T-cell (primary cell): ENCODE measurements at regions of chr14 and their contacts with region 1.

Region 1: DNA sequence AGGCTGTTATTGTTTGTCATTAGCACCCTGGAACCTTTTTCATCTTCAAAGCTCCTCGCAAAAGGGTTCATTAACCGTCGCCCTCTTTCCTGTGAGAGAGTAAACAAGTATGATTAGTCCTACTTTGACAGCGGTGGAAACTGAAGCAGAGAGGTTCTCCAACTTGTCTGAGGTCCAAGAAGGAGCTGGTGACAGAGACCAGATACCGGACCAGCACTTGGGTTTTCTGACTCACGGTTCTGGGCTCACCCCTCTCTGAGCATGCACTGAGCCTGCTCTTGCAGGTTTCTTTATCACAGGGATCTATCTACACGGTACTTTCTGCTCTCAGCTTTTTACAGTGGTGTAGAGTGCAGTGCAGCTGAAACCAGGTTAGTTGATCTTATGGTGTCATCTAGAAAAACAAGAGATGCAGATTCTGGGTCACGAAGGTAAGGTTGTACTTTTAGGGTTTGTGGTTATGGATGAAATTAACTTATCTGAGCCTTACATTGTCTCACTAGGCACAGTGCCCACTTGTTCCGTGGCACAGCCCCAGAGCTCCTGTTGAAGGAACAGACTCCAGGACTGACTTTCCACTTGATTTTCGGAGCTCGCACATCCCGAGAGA is 62.1 kb downstream of the PPP2R5C start:
- DNase-seq: peak in 34 of 35 experiments; percentile 28 to 86 (median 64)
- ATAC-seq: peak; percentile 66 to 68 (median 67)
- H3K4me3 ChIP-seq: peak overlapping the region; percentile 60 to 70
- H3K4me3 Mint-ChIP-seq: peak overlapping the region; percentile 81 to 91 (median 88)
- H3K27ac ChIP-seq: peak overlapping the region; percentile 99
- H3K27ac Mint-ChIP-seq: peak overlapping the region; percentile 97
- H3K4me1 ChIP-seq: peaks cover 62 to 67% of the 10 kb centered on the region in 2 experiments
- H3K4me1 Mint-ChIP-seq: peaks cover 68 to 88% (median 77%) of the 10 kb centered on the region in 3 donors
- H3K27me3 ChIP-seq: no peaks in the 10 kb centered on the region
- H3K27me3 Mint-ChIP-seq: no peaks in the 10 kb centered on the region

Region 2: GRCh38 chr14:101791919-101792572 is 31.6 kb before region 1 on chr14:
- CTCF ChIA-PET with region 1: interaction called, 4 read pairs
- POLR2A ChIA-PET with region 1: interaction called in 1 of 2 experiments, 44 read pairs
- DNase-seq: peak in 1 of 35 experiments; percentile 61
- ATAC-seq: peak; percentile 61 to 84 (median 73)
- H3K4me3 ChIP-seq: peak overlapping the region; percentile 5 to 41
- H3K4me3 Mint-ChIP-seq: peak overlapping the region; percentile 72 to 73 (median 72)
- H3K27ac ChIP-seq: peak overlapping the region; percentile 82
- H3K27ac Mint-ChIP-seq: peak overlapping the region; percentile 89 to 92
- H3K4me1 ChIP-seq: peaks cover 6 to 13% of the 10 kb centered on the region in 2 experiments
- H3K4me1 Mint-ChIP-seq: peaks cover 24 to 41% (median 25%) of the 10 kb centered on the region in 3 donors
- H3K27me3 ChIP-seq: no peaks in the 10 kb centered on the region
- H3K27me3 Mint-ChIP-seq: no peaks in the 10 kb centered on the region

Region 3: DNA sequence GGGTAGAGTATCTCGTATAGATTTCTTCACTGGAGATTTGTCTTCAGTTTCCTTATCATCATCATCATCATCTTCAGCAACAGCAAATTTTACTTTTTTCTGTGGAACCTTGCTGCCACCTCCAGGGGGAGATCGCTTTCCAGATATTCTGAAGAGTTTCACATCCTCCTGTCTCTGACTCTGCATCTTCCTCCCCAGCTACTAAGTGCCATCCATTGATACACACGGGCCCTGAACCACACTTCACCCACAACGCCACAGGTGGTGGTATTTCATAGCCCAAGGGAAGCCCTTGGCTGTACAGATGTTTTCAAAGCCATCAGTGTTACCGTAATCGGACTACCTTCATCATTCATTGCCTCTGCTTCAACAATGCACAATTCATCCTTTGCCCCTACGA is 20.0 kb after region 1 on chr14:
- CTCF ChIA-PET with region 1: interaction called in 1 of 2 experiments, 4 read pairs
- POLR2A ChIA-PET with region 1: interaction called, 6 to 10 read pairs
- DNase-seq: peak in 33 of 35 experiments; percentile 37 to 83 (median 55)
- ATAC-seq: peak; percentile 59 to 75 (median 70)
- H3K4me3 ChIP-seq: no peak overlapping the region
- H3K4me3 Mint-ChIP-seq: peak overlapping the region; percentile 3 to 29 (median 18)
- H3K27ac ChIP-seq: peak overlapping the region; percentile 55
- H3K27ac Mint-ChIP-seq: peak overlapping the region; percentile 77 to 88
- H3K4me1 ChIP-seq: peaks cover 23 to 79% of the 10 kb centered on the region in 2 experiments
- H3K4me1 Mint-ChIP-seq: peaks cover 93 to 97% (median 94%) of the 10 kb centered on the region in 3 donors
- H3K27me3 ChIP-seq: no peaks in the 10 kb centered on the region
- H3K27me3 Mint-ChIP-seq: no peaks in the 10 kb centered on the region

Region 4: DNA sequence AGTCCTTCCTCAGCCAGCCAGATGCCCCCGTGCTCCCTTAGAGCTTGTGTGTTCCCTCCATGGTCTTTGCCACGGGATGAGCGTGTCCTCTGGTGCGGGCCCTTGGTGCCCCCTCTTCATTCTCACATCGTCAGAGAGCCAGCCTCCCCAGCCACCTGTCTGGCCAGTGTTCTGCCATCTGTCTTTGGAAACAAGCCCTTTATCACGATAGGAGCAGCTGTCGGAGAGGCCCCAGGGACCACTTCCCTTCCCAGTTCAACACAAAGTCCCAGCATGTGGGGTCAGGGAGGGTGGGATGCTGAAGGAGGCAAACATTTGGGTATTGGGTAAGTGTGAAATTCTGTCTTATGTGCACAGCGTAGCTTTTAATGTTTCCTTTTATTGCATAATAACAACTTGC is 185.3 kb after region 1 on chr14:
- CTCF ChIA-PET with region 1: no interaction called
- POLR2A ChIA-PET with region 1: no interaction called
- DNase-seq: no peak
- ATAC-seq: no peak
- H3K4me3 ChIP-seq: no peak overlapping the region
- H3K4me3 Mint-ChIP-seq: no peak overlapping the region
- H3K27ac ChIP-seq: no peak overlapping the region
- H3K27ac Mint-ChIP-seq: no peak overlapping the region
- H3K4me1 ChIP-seq: no peaks in the 10 kb centered on the region
- H3K4me1 Mint-ChIP-seq: no peaks in the 10 kb centered on the region
- H3K27me3 ChIP-seq: no peaks in the 10 kb centered on the region
- H3K27me3 Mint-ChIP-seq: no peaks in the 10 kb centered on the region

Region 5: DNA sequence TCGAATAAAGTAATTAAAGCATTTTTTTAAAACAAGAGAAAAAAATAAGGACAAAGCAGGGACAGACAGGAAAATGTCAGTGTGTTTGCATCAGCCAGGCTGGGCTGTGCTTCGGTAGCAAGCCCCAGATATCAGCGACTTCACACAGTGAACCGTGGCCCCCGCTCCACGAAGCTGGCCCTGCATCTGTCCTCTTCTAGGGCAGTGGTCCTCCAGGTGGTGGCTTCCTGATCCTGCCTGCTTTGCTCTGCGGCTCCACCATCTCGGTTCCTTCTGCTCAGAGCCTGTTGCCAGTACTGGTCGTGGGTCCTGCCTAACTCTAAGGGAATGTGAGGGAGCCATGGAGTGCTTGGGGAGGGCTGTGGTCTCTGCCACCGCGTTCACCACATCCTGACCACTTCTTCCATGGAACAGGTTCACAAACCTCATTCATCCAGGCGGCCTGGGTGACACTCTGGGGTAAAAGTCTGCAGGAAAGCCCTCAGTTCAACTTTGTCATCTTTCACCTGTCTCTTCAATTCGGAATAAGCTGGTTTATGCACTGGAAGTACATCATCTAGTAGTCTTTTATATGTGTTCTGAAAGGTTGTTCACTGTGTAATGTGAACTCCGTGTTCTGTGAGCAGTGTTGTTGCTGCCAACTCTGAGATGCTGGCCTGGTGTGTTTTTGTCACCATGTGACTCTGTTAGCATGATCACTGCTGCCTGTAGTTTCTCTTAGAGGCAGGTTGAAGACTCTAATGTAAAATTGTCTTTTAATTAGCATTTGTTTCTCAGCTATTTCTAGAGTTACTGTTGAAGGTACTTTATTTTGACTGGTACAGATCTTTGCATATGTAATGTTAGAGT is 638.1 kb after region 1 on chr14:
- CTCF ChIA-PET with region 1: no interaction called
- POLR2A ChIA-PET with region 1: no interaction called
- DNase-seq: no peak
- ATAC-seq: no peak
- H3K4me3 ChIP-seq: no peak overlapping the region
- H3K4me3 Mint-ChIP-seq: no peak overlapping the region
- H3K27ac ChIP-seq: no peak overlapping the region
- H3K27ac Mint-ChIP-seq: no peak overlapping the region
- H3K4me1 ChIP-seq: no peaks in the 10 kb centered on the region
- H3K4me1 Mint-ChIP-seq: peaks cover 0 to 6% (median 5%) of the 10 kb centered on the region in 3 donors
- H3K27me3 ChIP-seq: no peaks in the 10 kb centered on the region
- H3K27me3 Mint-ChIP-seq: no peaks in the 10 kb centered on the region